Right lobe of liver (tissue), 6 donors: ENCODE measurements at regions of chr17 and their contacts with region 1.

Region 1: GRCh38 chr17:78250891-78251794 is 19.7 kb downstream of the TMEM235 start:
- DNase-seq: peak; percentile 89 to 91 (median 90)
- ATAC-seq: peak; percentile 82 to 91 (median 87)
- H3K4me3 ChIP-seq: no peak overlapping the region
- H3K27ac ChIP-seq: no peak overlapping the region
- H3K4me1 ChIP-seq: peaks cover 0 to 12% (median 3%) of the 10 kb centered on the region in 4 donors
- H3K27me3 ChIP-seq: no peaks in the 10 kb centered on the region
- CTCF ChIP-seq: peak; percentile 98 to 100 (median 100)
- POLR2A ChIP-seq: no peak

Region 2: GRCh38 chr17:78176548-78177025 is 74.6 kb before region 1 on chr17:
- intact Hi-C with region 1: loop called (anchors 5 to 10 kb)
- DNase-seq: peak; percentile 71 to 78 (median 75)
- ATAC-seq: peak; percentile 6 to 19 (median 12)
- H3K4me3 ChIP-seq: no peak overlapping the region
- H3K27ac ChIP-seq: peak overlapping the region in 1 of 3 donors; percentile 77
- H3K4me1 ChIP-seq: peaks cover 0 to 34% (median 17%) of the 10 kb centered on the region in 4 donors
- H3K27me3 ChIP-seq: no peaks in the 10 kb centered on the region
- CTCF ChIP-seq: peak; percentile 63 to 82 (median 66)
- POLR2A ChIP-seq: no peak

Region 3: DNA sequence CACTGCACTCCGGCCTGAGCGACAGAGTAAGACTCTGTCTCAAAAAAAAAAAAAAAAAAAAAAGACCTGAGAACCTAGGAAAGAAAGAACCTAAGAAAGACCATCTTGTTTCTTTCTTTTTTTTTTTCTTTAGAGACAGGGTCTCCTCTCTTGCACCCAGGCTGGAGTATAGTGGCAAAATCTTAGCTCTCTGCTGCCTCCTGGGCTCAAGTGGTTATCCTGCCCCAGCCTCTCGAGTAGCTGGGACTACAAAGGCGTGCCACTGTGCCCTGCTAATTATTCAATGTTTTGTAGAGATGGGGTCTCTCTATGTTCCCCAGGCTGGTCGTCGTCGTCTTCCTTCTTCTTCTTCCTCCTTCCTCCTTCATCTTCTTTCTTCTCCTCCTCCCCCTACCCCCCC is 44.8 kb before region 1 on chr17:
- intact Hi-C with region 1: no loop called
- DNase-seq: no peak
- ATAC-seq: no peak
- H3K4me3 ChIP-seq: no peak overlapping the region
- H3K27ac ChIP-seq: no peak overlapping the region
- H3K4me1 ChIP-seq: no peaks in the 10 kb centered on the region
- H3K27me3 ChIP-seq: no peaks in the 10 kb centered on the region
- CTCF ChIP-seq: no peak
- POLR2A ChIP-seq: no peak